ENCODE measurements at regions of chr5 and their contacts with region 1.

Region 1: DNA sequence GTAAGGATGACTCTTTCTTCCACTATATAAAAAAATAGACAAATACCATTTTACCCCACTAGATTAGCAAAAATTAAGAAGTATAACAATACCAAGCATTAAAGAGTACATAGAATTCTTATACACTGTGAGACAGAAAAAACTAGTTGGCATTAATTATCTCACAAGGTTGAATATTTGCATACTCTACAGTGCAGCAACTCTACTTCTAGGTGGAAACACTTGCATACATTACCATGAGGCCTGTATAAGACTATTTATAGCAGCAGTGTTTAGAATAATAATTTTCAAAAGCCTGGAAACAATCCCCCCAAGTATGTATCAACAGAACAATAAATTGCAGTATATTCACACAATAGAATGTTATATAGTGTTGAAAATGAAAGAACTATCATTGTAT is 19.0 kb upstream of the PURA start:
- DNase-seq: no peak
- ATAC-seq: peak; percentile 60
- H3K4me3 ChIP-seq: no peak overlapping the region
- H3K27ac ChIP-seq: no peak overlapping the region
- H3K4me1 ChIP-seq: no peaks in the 10 kb centered on the region
- H3K27me3 ChIP-seq: no peaks in the 10 kb centered on the region
- CTCF ChIP-seq: no peak
- EP300 ChIP-seq: no peak
- POLR2A ChIP-seq: no peak
- RAD21 ChIP-seq: no peak

Region 2: DNA sequence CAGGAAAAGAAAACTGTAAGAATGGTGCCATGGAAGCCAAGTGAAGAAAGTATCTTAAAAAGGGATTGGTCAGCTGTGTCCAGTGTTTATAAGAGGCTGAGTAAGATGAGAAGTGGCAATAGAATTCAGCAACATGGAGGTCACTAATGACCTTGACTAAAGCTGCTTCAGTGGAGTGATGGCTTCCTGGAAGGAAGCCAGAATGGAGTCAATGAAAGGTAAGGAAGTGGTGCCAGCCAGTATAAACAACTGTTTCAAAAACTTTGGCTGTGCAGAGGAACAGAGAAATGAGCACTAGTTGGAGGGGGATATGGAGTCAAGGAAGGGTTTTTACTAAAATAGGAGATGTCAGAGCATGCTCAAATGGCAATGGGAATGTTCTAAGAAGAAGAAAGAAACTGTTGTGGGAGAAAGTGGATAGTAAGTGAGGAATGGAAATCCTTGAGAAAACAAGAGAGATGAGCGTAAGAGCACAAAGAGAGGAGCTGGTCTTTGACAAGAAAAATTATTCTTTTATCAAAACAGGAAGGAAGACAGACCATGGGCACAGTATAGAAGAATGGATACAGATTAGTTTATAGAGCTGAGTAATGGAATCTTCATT is 40.7 kb before region 1 on chr5:
- CTCF ChIA-PET with region 1: no interaction called
- POLR2A ChIA-PET with region 1: no interaction called
- RAD21 ChIA-PET with region 1: no interaction called
- SMC1A ChIA-PET with region 1: no interaction called
- in situ Hi-C with region 1: no loop called
- intact Hi-C with region 1: no loop called
- DNase-seq: no peak
- ATAC-seq: no peak
- H3K4me3 ChIP-seq: no peak overlapping the region
- H3K27ac ChIP-seq: no peak overlapping the region
- H3K4me1 ChIP-seq: peaks cover 7% of the 10 kb centered on the region
- H3K27me3 ChIP-seq: no peaks in the 10 kb centered on the region
- CTCF ChIP-seq: no peak
- EP300 ChIP-seq: no peak
- POLR2A ChIP-seq: no peak
- RAD21 ChIP-seq: no peak

Region 3: DNA sequence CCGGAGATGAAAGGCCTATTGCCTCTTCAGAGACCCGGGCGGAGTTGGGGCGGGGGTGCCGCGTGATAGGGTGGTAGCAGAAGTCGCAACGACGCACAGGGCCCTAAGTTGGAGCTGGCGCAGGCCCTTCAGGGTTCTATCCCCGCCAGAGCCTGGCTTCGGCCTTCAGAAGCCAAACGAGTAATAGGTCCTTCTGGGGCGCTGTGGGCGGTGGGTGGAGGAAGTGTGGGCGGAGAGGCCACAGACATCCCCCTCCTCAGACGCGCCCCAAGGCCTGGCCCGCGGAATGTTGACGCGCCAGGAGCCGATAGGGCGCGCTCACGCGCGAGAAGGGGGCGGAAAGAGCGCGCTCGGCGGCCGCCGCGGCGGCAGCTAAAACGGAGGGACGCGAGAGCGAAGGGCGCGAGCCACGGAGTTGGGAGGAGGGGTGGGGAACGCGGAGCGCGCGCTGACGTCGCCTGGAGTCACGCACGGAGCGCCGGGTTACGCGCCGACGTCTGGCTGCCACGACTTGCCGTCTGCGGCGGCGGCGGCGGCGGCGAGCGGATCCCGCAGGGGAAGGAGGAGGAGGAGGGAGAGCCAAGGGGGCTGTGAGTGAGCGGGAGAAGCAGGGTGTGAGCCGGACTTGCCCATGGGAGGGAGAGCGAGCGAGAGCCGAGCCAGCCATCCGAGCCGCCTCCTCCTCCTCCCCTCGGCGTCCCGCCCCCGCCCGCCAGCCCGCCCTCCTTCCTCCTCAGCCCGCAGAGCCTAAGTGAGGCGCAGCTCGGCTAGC is 12.6 kb after region 1 on chr5:
- CTCF ChIA-PET with region 1: interaction called, 11 read pairs
- POLR2A ChIA-PET with region 1: interaction called, 5 read pairs
- RAD21 ChIA-PET with region 1: interaction called, 3 read pairs
- SMC1A ChIA-PET with region 1: interaction called, 8 read pairs
- in situ Hi-C with region 1: no loop called
- intact Hi-C with region 1: no loop called
- DNase-seq: peak; percentile 68
- ATAC-seq: peak; percentile 89
- H3K4me3 ChIP-seq: peak overlapping the region; percentile 86
- H3K27ac ChIP-seq: peak overlapping the region; percentile 67
- H3K4me1 ChIP-seq: peaks cover 20% of the 10 kb centered on the region
- H3K27me3 ChIP-seq: no peaks in the 10 kb centered on the region
- CTCF ChIP-seq: peak; percentile 6 to 29 (median 27); a peak in 3 of 6 replicates
- EP300 ChIP-seq: no peak
- POLR2A ChIP-seq: peak; percentile 86
- RAD21 ChIP-seq: no peak

Region 4: GRCh38 chr5:140131967-140132409 is 37.1 kb after region 1 on chr5:
- CTCF ChIA-PET with region 1: interaction called, 3 read pairs
- POLR2A ChIA-PET with region 1: interaction called, 10 read pairs
- RAD21 ChIA-PET with region 1: no interaction called
- SMC1A ChIA-PET with region 1: no interaction called
- in situ Hi-C with region 1: no loop called
- intact Hi-C with region 1: no loop called
- DNase-seq: no peak
- ATAC-seq: peak; percentile 60
- H3K4me3 ChIP-seq: no peak overlapping the region
- H3K27ac ChIP-seq: no peak overlapping the region
- H3K4me1 ChIP-seq: peaks cover 8% of the 10 kb centered on the region; the same call in 1 of the 2 replicates
- H3K27me3 ChIP-seq: no peaks in the 10 kb centered on the region
- CTCF ChIP-seq: no peak
- EP300 ChIP-seq: no peak
- POLR2A ChIP-seq: no peak
- RAD21 ChIP-seq: no peak

Region 5: DNA sequence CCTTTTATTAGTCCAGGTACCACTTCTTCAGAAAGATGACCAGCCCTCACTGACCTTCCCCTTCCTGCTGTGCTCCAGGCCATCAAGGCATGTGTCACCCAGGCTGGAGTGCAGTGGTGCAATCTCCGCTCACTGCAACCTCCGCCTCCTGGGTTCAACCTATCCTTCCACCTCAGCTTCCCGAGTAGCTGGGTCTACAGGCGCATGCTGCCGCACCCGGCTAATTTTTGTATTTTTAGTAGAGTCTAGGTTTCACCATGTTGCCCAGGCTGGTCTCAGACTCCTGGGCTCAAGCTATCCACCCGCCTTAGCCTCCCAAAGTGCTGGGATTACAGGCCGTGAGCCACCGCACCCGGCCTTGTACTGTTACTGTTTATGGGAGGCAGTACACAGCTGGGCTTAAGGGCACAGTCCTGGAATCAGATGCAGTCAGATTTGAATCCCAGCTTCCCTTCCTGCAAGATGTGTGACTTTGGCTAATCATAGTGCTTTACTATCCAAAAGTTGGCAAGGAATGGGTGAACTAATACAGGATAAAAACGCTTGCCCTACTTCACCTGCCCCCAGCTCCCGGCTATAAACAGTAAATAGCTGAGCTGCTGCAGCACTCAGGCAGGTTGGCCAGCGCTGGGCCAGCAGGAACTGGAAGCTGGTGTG is 452.1 kb after region 1 on chr5:
- CTCF ChIA-PET with region 1: no interaction called
- POLR2A ChIA-PET with region 1: no interaction called
- RAD21 ChIA-PET with region 1: no interaction called
- SMC1A ChIA-PET with region 1: no interaction called
- in situ Hi-C with region 1: no loop called
- intact Hi-C with region 1: no loop called
- DNase-seq: no peak
- ATAC-seq: peak; percentile 1; the same call in 2 of the 3 replicates
- H3K4me3 ChIP-seq: no peak overlapping the region
- H3K27ac ChIP-seq: peak overlapping the region; percentile 77
- H3K4me1 ChIP-seq: peaks cover 19% of the 10 kb centered on the region
- H3K27me3 ChIP-seq: no peaks in the 10 kb centered on the region
- CTCF ChIP-seq: no peak
- EP300 ChIP-seq: no peak
- POLR2A ChIP-seq: no peak
- RAD21 ChIP-seq: no peak